Left lung (tissue), 14 donors: ENCODE measurements at regions of chr12 and their contacts with region 1.

Region 1: GRCh38 chr12:111304642-111305071 is 64.2 kb downstream of the PHETA1 start:
- DNase-seq: no peak
- ATAC-seq: no peak
- H3K4me3 ChIP-seq: no peak overlapping the region
- H3K27ac ChIP-seq: no peak overlapping the region
- H3K4me1 ChIP-seq: no peaks in the 10 kb centered on the region
- H3K27me3 ChIP-seq: no peaks in the 10 kb centered on the region
- CTCF ChIP-seq: peak; percentile 25 to 54

Region 2: DNA sequence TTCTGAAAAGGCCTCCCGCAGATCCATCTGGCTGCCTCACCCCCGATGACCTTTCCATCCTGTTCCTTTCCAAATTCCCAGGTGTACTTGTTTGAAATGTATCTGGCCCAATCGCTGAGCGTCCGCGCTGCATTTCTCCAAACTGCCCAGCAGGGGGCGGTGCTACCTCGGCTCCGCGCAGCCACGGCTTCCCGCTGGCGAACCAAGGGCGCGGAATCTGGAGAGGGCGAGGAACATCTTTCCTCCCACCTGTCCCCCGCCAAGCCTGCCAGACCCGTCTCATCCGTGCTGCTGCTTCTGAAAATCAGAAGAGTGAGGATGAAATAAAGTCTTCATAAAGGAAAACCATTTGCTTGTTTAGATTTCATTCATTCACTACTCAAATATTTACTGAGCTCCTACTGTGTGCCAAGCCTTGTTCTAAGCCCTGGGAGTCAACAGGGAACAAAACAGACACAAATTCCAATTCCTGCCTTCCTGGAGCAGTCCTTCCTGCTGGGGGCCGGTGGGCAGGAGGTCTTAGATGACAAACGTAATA is 367.5 kb before region 1 on chr12:
- intact Hi-C with region 1: loop called in 1 of 2 experiments (anchors 10 kb)
- DNase-seq: peak; percentile 36 to 92 (median 54)
- ATAC-seq: peak; percentile 95
- H3K4me3 ChIP-seq: no peak overlapping the region
- H3K27ac ChIP-seq: no peak overlapping the region
- H3K4me1 ChIP-seq: peaks cover 0 to 3% of the 10 kb centered on the region in 2 donors
- H3K27me3 ChIP-seq: peaks cover 5 to 51% of the 10 kb centered on the region in 2 donors
- CTCF ChIP-seq: peak; percentile 89 to 90

Region 3: DNA sequence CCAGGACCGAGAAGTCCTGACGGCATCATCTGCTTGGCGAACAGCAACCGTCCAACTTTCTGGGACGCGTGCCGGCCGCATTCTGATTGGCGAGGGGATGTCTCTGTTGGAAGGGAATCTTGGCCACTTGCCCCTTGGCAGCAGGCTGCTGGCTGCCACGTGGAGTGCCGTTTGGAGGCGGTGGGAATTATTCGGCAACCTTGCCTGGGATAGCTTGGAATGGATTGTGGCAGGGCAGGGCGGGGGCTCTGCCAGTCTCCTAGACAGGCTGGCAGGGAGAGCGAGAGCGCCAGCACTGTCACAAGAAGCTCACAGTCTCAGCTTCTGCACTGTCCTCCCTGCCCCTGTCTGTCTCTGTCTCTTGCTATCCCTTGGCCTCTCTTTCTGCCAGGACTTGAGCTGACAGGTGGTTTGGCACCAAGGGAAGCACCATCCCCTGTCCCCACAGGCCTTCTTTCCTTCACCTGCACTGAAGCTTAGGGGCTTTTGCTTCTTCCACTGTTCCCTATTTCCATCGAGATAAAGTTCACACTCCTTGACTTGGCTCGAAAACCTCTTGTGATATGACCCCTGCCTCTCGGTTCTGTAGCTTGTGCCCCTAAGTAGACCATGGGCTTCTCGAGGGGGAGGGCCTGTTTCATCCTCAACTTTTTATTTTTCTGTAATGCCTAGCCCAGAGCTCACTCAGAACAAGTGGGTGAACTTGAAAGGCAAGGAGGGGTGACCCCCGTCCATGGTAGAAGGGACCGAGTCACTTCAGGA is 137.7 kb before region 1 on chr12:
- intact Hi-C with region 1: no loop called
- DNase-seq: peak in 2 of 4 donors; percentile 69 to 84
- ATAC-seq: no peak
- H3K4me3 ChIP-seq: no peak overlapping the region
- H3K27ac ChIP-seq: no peak overlapping the region
- H3K4me1 ChIP-seq: peaks cover 0 to 8% of the 10 kb centered on the region in 2 donors
- H3K27me3 ChIP-seq: peaks cover 0 to 48% of the 10 kb centered on the region in 2 donors
- CTCF ChIP-seq: no peak

Region 4: GRCh38 chr12:111224186-111225066 is 80.2 kb before region 1 on chr12:
- intact Hi-C with region 1: no loop called
- DNase-seq: no peak
- ATAC-seq: no peak
- H3K4me3 ChIP-seq: no peak overlapping the region
- H3K27ac ChIP-seq: no peak overlapping the region
- H3K4me1 ChIP-seq: no peaks in the 10 kb centered on the region
- H3K27me3 ChIP-seq: peaks cover 0 to 26% of the 10 kb centered on the region in 2 donors
- CTCF ChIP-seq: no peak